HCT116 (cell line): ENCODE measurements at regions of chr15 and their contacts with region 1.

Region 1: DNA sequence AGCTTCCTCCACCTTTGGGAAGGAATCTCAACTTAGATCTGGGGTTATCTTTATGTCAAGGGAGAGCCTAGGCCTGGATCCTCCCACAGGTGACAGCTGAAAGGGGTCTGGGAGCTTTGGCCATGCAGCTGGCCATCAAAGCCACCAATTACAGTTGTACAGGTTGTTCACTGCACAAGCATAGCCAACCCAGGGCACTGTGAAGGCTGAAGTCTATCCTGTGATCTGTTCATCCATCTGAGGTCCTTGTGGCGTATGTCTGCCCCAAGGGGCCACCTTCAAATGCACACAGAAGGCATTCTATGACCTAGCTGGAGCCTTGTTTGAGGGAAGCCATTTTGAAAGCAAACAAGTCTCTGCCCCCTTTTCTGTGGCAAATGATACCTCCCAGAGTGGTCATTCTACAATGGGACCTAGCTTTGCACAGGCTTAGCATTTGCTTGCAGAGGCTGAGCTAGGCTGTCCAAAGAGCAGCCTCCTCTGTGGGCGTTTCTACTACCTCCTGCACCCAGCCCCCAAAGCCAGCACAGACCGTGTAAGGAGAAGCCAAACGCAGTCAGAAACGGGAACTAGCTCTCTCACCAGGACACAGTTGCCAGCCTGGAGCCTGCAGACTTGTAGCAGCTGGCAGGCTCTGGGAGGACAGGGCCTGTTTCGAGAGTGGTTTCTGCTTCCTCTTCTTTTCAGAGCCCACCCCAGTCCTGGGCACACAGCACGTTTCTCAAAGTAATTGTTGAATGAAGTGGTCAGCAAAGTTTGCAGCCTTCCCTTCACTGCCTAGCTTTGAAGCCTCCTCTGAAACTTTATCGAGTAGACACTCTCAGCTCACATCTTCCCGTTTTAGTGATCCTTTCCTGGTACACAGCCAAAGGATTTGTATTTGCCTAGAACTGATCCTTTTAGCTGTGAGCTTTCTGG is 157.3 kb upstream of the SMAD3 start:
- DNase-seq: no peak
- ATAC-seq: no peak
- H3K4me3 ChIP-seq: no peak overlapping the region
- H3K27ac ChIP-seq: no peak overlapping the region
- H3K4me1 ChIP-seq: no peaks in the 10 kb centered on the region; a peak in 1 of 4 replicates
- H3K27me3 ChIP-seq: no peaks in the 10 kb centered on the region
- CTCF ChIP-seq: no peak
- POLR2A ChIP-seq: no peak
- RAD21 ChIP-seq: no peak

Region 2: GRCh38 chr15:66603301-66604179 is 304.5 kb before region 1 on chr15:
- CTCF ChIA-PET with region 1: no interaction called
- POLR2A ChIA-PET with region 1: no interaction called
- RAD21 ChIA-PET with region 1: no interaction called
- intact Hi-C with region 1: loop called (anchors 1 kb)
- DNase-seq: peak; percentile 43
- ATAC-seq: peak; percentile 99
- H3K4me3 ChIP-seq: no peak overlapping the region
- H3K27ac ChIP-seq: no peak overlapping the region
- H3K4me1 ChIP-seq: peaks cover 0 to 3% of the 10 kb centered on the region in 2 experiments; a peak in 1 of 4 replicates
- H3K27me3 ChIP-seq: no peaks in the 10 kb centered on the region; the same call in 1 of the 2 replicates
- CTCF ChIP-seq: peak; percentile 80 to 93 (median 84)
- POLR2A ChIP-seq: no peak
- RAD21 ChIP-seq: peak; percentile 94

Region 3: DNA sequence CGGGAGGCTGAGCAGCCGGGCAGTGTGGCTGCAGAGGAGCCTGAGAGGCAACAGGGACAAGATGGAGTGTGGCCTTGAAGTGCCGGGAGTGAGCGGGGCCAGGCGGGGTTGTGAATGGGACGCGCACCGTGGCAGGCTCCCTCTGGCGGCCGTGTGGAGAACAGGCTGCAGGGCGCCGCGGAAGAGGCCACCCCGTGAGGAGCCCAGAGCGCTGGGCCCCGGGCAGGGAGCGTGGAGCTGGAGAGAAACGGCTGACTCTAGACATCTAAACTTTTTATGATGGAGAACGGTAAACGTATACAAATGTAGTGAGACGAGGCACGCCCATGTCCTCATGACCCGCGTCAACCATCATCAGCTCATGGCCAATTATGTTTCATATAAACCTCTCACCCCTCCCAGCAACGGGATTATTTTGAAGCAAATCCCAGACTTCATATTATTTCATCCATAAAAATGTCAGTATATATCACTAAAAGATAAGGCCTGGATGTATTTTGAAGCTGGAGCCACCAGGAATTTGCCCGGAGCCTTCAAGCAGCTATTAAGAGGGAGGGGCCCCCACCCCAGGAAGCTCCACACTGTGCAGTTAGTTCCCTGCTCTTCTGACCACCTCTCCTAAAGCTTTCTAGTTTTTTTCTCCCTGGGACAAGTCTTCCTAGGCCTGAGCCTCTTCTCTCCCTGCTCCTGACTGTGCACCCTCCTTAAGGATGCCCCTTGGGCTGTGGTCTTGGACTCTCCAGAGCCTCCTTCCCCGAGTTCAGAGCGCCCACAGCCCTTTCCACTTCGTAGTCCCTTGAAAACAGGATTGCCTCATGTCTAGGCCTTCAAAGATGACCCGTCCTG is 56.6 kb before region 1 on chr15:
- CTCF ChIA-PET with region 1: no interaction called
- POLR2A ChIA-PET with region 1: no interaction called
- RAD21 ChIA-PET with region 1: no interaction called
- intact Hi-C with region 1: no loop called
- DNase-seq: peak; percentile 59
- ATAC-seq: peak; percentile 94
- H3K4me3 ChIP-seq: no peak overlapping the region
- H3K27ac ChIP-seq: no peak overlapping the region
- H3K4me1 ChIP-seq: peaks cover 11 to 18% of the 10 kb centered on the region in 2 experiments; a peak in 3 of 4 replicates
- H3K27me3 ChIP-seq: no peaks in the 10 kb centered on the region
- CTCF ChIP-seq: peak; percentile 87 to 95 (median 94)
- POLR2A ChIP-seq: no peak
- RAD21 ChIP-seq: peak; percentile 86

Region 4: GRCh38 chr15:66923438-66923881 is 15.4 kb after region 1 on chr15:
- CTCF ChIA-PET with region 1: interaction called, 4 read pairs
- POLR2A ChIA-PET with region 1: no interaction called
- RAD21 ChIA-PET with region 1: no interaction called
- intact Hi-C with region 1: loop called (anchors 2 kb)
- DNase-seq: peak; percentile 37
- ATAC-seq: peak; percentile 100
- H3K4me3 ChIP-seq: peak overlapping the region in 1 of 2 experiments; percentile 17; a peak in 1 of 4 replicates
- H3K27ac ChIP-seq: no peak overlapping the region
- H3K4me1 ChIP-seq: peaks cover 0 to 11% of the 10 kb centered on the region in 2 experiments; a peak in 2 of 4 replicates
- H3K27me3 ChIP-seq: no peaks in the 10 kb centered on the region
- CTCF ChIP-seq: peak; percentile 63 to 92 (median 86); a peak in 5 of 6 replicates
- POLR2A ChIP-seq: no peak
- RAD21 ChIP-seq: peak; percentile 51